Right lobe of liver (tissue), 6 donors: ENCODE measurements at regions of chr1 and their contacts with region 1.

Region 1: GRCh38 chr1:47432071-47433036 is 5.5 kb upstream of the FOXD2 start:
- DNase-seq: peak in 2 of 3 donors; percentile 68 to 70
- ATAC-seq: peak; percentile 59 to 69 (median 66)
- H3K4me3 ChIP-seq: no peak overlapping the region
- H3K27ac ChIP-seq: no peak overlapping the region
- H3K4me1 ChIP-seq: peaks cover 0 to 21% (median 0%) of the 10 kb centered on the region in 4 donors
- H3K27me3 ChIP-seq: no peaks in the 10 kb centered on the region
- CTCF ChIP-seq: peak; percentile 53 to 74 (median 65)
- POLR2A ChIP-seq: no peak

Region 2: GRCh38 chr1:47710329-47711071 is 278.1 kb after region 1 on chr1:
- intact Hi-C with region 1: loop called in 1 of 2 experiments (anchors 5 kb)
- DNase-seq: peak; percentile 86 to 88 (median 86)
- ATAC-seq: peak; percentile 94 to 97 (median 96)
- H3K4me3 ChIP-seq: peak overlapping the region in 1 of 3 donors; percentile 45
- H3K27ac ChIP-seq: no peak overlapping the region
- H3K4me1 ChIP-seq: peaks cover 0 to 25% (median 5%) of the 10 kb centered on the region in 4 donors
- H3K27me3 ChIP-seq: peaks cover 4 to 12% of the 10 kb centered on the region in 2 donors
- CTCF ChIP-seq: peak in 3 of 4 donors; percentile 98 to 99 (median 98)
- POLR2A ChIP-seq: no peak